Activated CD4-positive, alpha-beta T cell treated with anti-CD3 and anti-CD28 coated beads, Interleukin-2, amount 10 ng/mL, durations not matched to agents 24 days and 14 days (primary cell): ENCODE measurements at regions of chr14 and their contacts with region 1.

Region 1: DNA sequence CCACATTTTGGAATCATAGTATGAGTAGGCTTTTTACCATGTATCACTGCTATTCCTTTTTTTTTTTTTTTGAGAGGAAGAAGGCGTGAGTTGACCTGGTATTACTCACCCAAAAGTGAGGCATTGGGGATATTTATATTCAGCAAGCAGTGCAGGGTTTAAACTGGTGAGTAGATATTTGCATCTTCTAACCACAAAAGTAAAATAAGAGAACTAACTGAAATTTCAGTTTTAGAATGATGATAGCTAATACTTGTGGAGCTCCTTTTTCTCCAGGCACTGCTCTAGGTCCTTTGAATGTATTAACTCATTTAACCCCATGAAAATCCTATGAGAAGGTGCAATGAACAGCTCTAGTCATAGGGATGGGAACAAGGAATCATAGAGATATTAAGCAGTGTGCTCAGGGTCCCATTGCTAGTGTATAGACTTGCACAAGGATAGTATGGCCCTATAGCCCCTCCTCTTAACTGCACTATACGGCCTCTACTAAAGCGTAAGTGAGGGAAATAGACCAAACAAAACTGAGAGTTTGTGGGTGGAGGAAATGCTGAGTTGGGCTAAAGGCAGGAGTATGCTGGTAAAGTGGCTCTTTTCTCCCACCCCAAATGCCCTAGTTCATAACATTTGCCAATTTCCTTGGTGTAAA is 104.3 kb upstream of the MAX start:
- DNase-seq: peak; percentile 78
- H3K4me3 Mint-ChIP-seq: peak overlapping the region; percentile 71
- H3K27ac Mint-ChIP-seq: peak overlapping the region; percentile 90
- H3K4me1 Mint-ChIP-seq: peaks cover 62% of the 10 kb centered on the region
- H3K27me3 Mint-ChIP-seq: no peaks in the 10 kb centered on the region

Region 2: GRCh38 chr14:64878837-64879634 is 327.5 kb before region 1 on chr14:
- intact Hi-C with region 1: no loop called
- DNase-seq: no peak
- H3K4me3 Mint-ChIP-seq: peak overlapping the region; percentile 58
- H3K27ac Mint-ChIP-seq: no peak overlapping the region
- H3K4me1 Mint-ChIP-seq: peaks cover 12% of the 10 kb centered on the region
- H3K27me3 Mint-ChIP-seq: peaks cover 78% of the 10 kb centered on the region

Region 3: DNA sequence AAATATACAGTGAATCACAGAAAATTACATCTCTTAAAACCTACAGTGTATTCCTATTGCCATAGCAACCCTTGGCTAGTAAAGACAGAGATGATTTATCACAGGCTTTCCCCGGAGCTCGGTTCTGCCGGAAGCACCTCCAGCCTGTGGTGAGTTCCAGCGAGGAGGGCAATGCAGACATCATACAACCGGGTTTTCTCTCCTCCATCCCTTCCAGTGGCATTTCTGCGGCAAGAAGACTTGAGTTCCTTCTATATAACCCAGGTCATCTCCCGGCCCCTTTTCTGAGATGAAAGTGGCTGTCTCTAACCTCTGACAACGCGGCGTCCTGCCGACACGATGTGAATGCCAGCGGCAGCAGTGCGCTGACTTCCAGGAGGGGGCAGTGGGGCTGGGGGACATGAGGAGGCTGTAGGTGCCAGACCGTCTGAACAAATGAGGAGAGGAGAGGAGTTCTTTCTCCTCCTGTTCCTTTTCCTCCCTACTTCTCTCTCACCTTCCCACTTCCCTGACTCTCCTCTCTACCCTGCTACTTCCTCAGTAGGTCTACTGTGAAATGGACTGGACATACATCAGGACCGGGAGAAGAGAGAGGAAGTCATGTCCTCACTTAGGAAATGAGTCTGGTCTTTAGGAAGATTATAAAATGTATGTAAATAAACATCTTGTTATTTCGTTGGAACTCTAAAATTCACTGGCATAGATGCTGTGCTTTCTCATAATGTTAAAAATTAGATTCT is 35.6 kb before region 1 on chr14:
- intact Hi-C with region 1: loop called (anchors 1 kb)
- DNase-seq: peak; percentile 88
- H3K4me3 Mint-ChIP-seq: peak overlapping the region; percentile 78
- H3K27ac Mint-ChIP-seq: peak overlapping the region; percentile 82
- H3K4me1 Mint-ChIP-seq: peaks cover 36% of the 10 kb centered on the region
- H3K27me3 Mint-ChIP-seq: peaks cover 3% of the 10 kb centered on the region

Region 4: GRCh38 chr14:65287264-65288131 is 80.9 kb after region 1 on chr14:
- intact Hi-C with region 1: loop called (anchors 1 kb)
- DNase-seq: peak; percentile 89
- H3K4me3 Mint-ChIP-seq: peak overlapping the region; percentile 78
- H3K27ac Mint-ChIP-seq: peak overlapping the region; percentile 98
- H3K4me1 Mint-ChIP-seq: peaks cover 66% of the 10 kb centered on the region
- H3K27me3 Mint-ChIP-seq: no peaks in the 10 kb centered on the region

Region 5: GRCh38 chr14:65356327-65356852 is 149.8 kb after region 1 on chr14:
- intact Hi-C with region 1: loop called (anchors 5 kb)
- DNase-seq: peak; percentile 77
- H3K4me3 Mint-ChIP-seq: peak overlapping the region; percentile 34
- H3K27ac Mint-ChIP-seq: peak overlapping the region; percentile 78
- H3K4me1 Mint-ChIP-seq: peaks cover 61% of the 10 kb centered on the region
- H3K27me3 Mint-ChIP-seq: no peaks in the 10 kb centered on the region

Region 6: GRCh38 chr14:65637780-65638179 is 431.2 kb after region 1 on chr14:
- intact Hi-C with region 1: loop called (anchors 10 kb)
- DNase-seq: peak; percentile 77
- H3K4me3 Mint-ChIP-seq: peak overlapping the region; percentile 23
- H3K27ac Mint-ChIP-seq: peak overlapping the region; percentile 77
- H3K4me1 Mint-ChIP-seq: peaks cover 44% of the 10 kb centered on the region
- H3K27me3 Mint-ChIP-seq: no peaks in the 10 kb centered on the region

Region 7: GRCh38 chr14:65949711-65950516 is 743.3 kb after region 1 on chr14:
- intact Hi-C with region 1: loop called (anchors 5 kb)
- DNase-seq: peak; percentile 71
- H3K4me3 Mint-ChIP-seq: peak overlapping the region; percentile 14
- H3K27ac Mint-ChIP-seq: peak overlapping the region; percentile 82
- H3K4me1 Mint-ChIP-seq: peaks cover 40% of the 10 kb centered on the region
- H3K27me3 Mint-ChIP-seq: peaks cover 9% of the 10 kb centered on the region